Caco-2 (cell line): ENCODE measurements at regions of chr13 and their contacts with region 1.

Region 1: GRCh38 chr13:30114571-30115256 is 192.6 kb downstream of the KATNAL1 start:
- DNase-seq: peak; percentile 91 to 96
- H3K4me3 ChIP-seq: peak overlapping the region; percentile 64
- H3K4me3 Mint-ChIP-seq: peak overlapping the region; percentile 95
- H3K27ac Mint-ChIP-seq: peak overlapping the region; percentile 96
- H3K4me1 ChIP-seq: peaks cover 31% of the 10 kb centered on the region
- H3K4me1 Mint-ChIP-seq: peaks cover 33% of the 10 kb centered on the region
- H3K27me3 ChIP-seq: no peaks in the 10 kb centered on the region
- H3K27me3 Mint-ChIP-seq: no peaks in the 10 kb centered on the region
- CTCF ChIP-seq: peak; percentile 93 to 96

Region 2: DNA sequence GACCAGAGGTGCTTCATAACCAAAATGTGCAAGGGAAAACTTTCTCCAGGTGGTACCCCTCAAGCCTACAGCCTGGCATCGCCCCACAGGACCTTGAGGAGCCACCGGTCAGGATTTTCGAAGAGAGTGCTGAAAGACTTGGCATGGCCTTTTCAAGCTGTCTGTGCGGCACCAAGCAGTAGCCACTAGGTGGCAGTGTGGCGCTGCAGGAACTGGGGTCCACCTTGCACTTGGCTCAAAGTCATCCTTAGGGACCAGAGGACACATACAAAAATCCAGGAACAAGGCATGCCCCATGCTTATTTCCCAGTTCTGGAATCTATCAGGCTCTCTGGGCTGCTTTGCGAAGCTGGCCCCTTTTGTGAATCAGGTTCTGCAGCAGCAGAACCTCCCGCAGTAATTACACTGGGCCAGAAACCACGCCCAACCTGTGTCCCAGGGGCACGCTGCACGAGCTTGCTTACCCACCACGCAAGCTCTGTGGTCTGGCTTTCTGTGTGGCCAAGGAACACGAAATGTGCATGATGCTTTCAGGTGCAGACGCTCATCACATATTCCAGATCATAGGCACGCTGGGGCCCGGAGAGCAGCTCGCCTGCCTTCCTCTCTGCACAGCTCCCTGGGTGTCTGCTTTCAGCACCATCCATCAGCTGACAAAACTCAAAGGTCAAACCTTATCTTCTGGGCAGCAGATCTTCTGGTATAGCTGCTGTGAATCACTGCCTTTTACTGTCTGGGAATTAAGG is 606.4 kb before region 1 on chr13:
- CTCF ChIA-PET with region 1: interaction called, 8 read pairs
- POLR2A ChIA-PET with region 1: no interaction called
- intact Hi-C with region 1: loop called (anchors 1 kb)
- DNase-seq: peak; percentile 78 to 86
- H3K4me3 ChIP-seq: no peak overlapping the region
- H3K4me3 Mint-ChIP-seq: peak overlapping the region; percentile 32
- H3K27ac Mint-ChIP-seq: peak overlapping the region; percentile 87
- H3K4me1 ChIP-seq: peaks cover 14% of the 10 kb centered on the region
- H3K4me1 Mint-ChIP-seq: peaks cover 20% of the 10 kb centered on the region
- H3K27me3 ChIP-seq: no peaks in the 10 kb centered on the region
- H3K27me3 Mint-ChIP-seq: no peaks in the 10 kb centered on the region
- CTCF ChIP-seq: peak; percentile 90 to 98

Region 3: GRCh38 chr13:29763436-29764180 is 351.1 kb before region 1 on chr13:
- CTCF ChIA-PET with region 1: interaction called, 3 read pairs
- POLR2A ChIA-PET with region 1: no interaction called
- intact Hi-C with region 1: loop called (anchors 2 kb)
- DNase-seq: no peak
- H3K4me3 ChIP-seq: no peak overlapping the region
- H3K4me3 Mint-ChIP-seq: no peak overlapping the region
- H3K27ac Mint-ChIP-seq: no peak overlapping the region
- H3K4me1 ChIP-seq: no peaks in the 10 kb centered on the region
- H3K4me1 Mint-ChIP-seq: peaks cover 4% of the 10 kb centered on the region
- H3K27me3 ChIP-seq: no peaks in the 10 kb centered on the region
- H3K27me3 Mint-ChIP-seq: no peaks in the 10 kb centered on the region
- CTCF ChIP-seq: no peak

Region 4: DNA sequence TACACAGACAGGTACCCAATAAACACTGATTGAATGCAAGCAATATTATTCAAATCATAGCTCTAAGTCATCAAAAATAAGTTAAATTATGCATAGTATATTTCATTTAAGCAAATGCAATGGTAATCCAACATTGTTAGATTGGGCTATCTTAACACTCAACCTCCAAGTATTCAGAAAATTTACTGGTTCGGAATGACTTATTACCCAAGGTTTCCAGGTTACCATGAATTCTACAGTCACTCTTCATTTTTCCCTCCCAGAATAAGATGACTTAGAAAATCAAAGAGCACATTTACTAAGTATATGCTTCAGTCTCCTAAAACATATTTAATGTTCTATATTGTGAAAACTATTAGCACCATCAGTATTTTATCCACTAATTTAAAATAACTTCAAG is 270.3 kb before region 1 on chr13:
- CTCF ChIA-PET with region 1: interaction called, 13 read pairs
- POLR2A ChIA-PET with region 1: interaction called, 4 read pairs
- intact Hi-C with region 1: loop called (anchors 1 kb)
- DNase-seq: no peak
- H3K4me3 ChIP-seq: no peak overlapping the region
- H3K4me3 Mint-ChIP-seq: no peak overlapping the region
- H3K27ac Mint-ChIP-seq: peak overlapping the region; percentile 32
- H3K4me1 ChIP-seq: peaks cover 58% of the 10 kb centered on the region
- H3K4me1 Mint-ChIP-seq: peaks cover 41% of the 10 kb centered on the region
- H3K27me3 ChIP-seq: no peaks in the 10 kb centered on the region
- H3K27me3 Mint-ChIP-seq: no peaks in the 10 kb centered on the region
- CTCF ChIP-seq: no peak

Region 5: GRCh38 chr13:29923554-29924481 is 190.9 kb before region 1 on chr13:
- CTCF ChIA-PET with region 1: interaction called, 45 read pairs
- POLR2A ChIA-PET with region 1: interaction called, 5 read pairs
- intact Hi-C with region 1: loop called (anchors 1 kb)
- DNase-seq: peak; percentile 95 to 97
- H3K4me3 ChIP-seq: no peak overlapping the region
- H3K4me3 Mint-ChIP-seq: peak overlapping the region; percentile 41
- H3K27ac Mint-ChIP-seq: peak overlapping the region; percentile 92
- H3K4me1 ChIP-seq: peaks cover 38% of the 10 kb centered on the region
- H3K4me1 Mint-ChIP-seq: peaks cover 37% of the 10 kb centered on the region
- H3K27me3 ChIP-seq: no peaks in the 10 kb centered on the region
- H3K27me3 Mint-ChIP-seq: no peaks in the 10 kb centered on the region
- CTCF ChIP-seq: peak; percentile 97

Region 6: GRCh38 chr13:30002577-30002976 is 112.1 kb before region 1 on chr13:
- CTCF ChIA-PET with region 1: no interaction called
- POLR2A ChIA-PET with region 1: no interaction called
- intact Hi-C with region 1: no loop called
- DNase-seq: no peak
- H3K4me3 ChIP-seq: no peak overlapping the region
- H3K4me3 Mint-ChIP-seq: no peak overlapping the region
- H3K27ac Mint-ChIP-seq: no peak overlapping the region
- H3K4me1 ChIP-seq: no peaks in the 10 kb centered on the region; the same call in 1 of the 2 replicates
- H3K4me1 Mint-ChIP-seq: peaks cover 19% of the 10 kb centered on the region
- H3K27me3 ChIP-seq: no peaks in the 10 kb centered on the region
- H3K27me3 Mint-ChIP-seq: no peaks in the 10 kb centered on the region
- CTCF ChIP-seq: no peak

Region 7: GRCh38 chr13:30026093-30026492 is 88.6 kb before region 1 on chr13:
- CTCF ChIA-PET with region 1: interaction called, 5 read pairs
- POLR2A ChIA-PET with region 1: interaction called, 4 read pairs
- intact Hi-C with region 1: loop called (anchors 10 kb)
- DNase-seq: no peak
- H3K4me3 ChIP-seq: no peak overlapping the region
- H3K4me3 Mint-ChIP-seq: no peak overlapping the region
- H3K27ac Mint-ChIP-seq: peak overlapping the region; percentile 73
- H3K4me1 ChIP-seq: peaks cover 59% of the 10 kb centered on the region
- H3K4me1 Mint-ChIP-seq: peaks cover 35% of the 10 kb centered on the region
- H3K27me3 ChIP-seq: no peaks in the 10 kb centered on the region
- H3K27me3 Mint-ChIP-seq: no peaks in the 10 kb centered on the region
- CTCF ChIP-seq: no peak

Region 8: DNA sequence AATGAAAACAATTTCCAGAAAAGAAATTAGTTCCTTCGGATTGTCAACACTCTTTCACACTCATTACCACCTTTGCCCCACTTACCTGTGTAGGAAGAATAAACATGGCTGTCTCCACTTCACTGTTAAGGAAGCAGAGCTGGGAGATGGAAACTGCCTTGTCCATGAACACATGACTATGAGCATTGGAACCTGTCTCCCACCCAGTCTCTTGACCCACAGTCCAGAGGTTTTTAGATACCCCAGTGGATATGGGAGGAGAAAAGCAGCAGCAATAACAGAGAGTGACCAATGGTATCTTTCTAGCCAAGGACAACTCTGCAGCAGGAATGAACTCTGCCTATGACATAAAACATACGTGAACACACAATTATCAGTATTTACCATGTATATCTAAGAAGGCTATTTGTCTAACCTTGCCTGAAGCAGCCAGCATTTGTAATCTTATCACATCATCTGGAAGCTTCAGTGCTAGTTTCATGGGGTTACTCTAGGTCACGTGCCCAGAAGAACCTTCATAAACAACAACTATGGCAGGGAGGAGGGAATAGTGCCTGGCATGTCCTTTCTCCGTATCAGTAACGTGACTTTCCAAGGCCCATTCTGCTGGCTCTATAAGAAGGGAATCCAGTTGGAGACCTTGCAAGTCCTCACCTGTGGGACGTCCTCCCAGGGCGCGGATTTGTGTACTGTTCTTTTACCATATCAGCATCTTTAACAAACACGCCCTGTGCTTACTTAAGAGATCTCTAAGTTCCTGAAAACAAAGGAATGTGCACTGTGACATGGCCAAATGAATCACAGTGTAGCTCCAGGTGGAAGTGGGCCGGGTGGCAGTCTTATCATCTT is 42.5 kb before region 1 on chr13:
- CTCF ChIA-PET with region 1: interaction called, 7 read pairs
- POLR2A ChIA-PET with region 1: no interaction called
- intact Hi-C with region 1: loop called (anchors 1 kb)
- DNase-seq: peak; percentile 86 to 93
- H3K4me3 ChIP-seq: no peak overlapping the region
- H3K4me3 Mint-ChIP-seq: peak overlapping the region; percentile 61
- H3K27ac Mint-ChIP-seq: peak overlapping the region; percentile 91
- H3K4me1 ChIP-seq: peaks cover 23% of the 10 kb centered on the region
- H3K4me1 Mint-ChIP-seq: peaks cover 23% of the 10 kb centered on the region
- H3K27me3 ChIP-seq: no peaks in the 10 kb centered on the region
- H3K27me3 Mint-ChIP-seq: no peaks in the 10 kb centered on the region
- CTCF ChIP-seq: no peak

Region 9: GRCh38 chr13:30158774-30159445 is 44.2 kb after region 1 on chr13:
- CTCF ChIA-PET with region 1: no interaction called
- POLR2A ChIA-PET with region 1: no interaction called
- intact Hi-C with region 1: no loop called
- DNase-seq: no peak
- H3K4me3 ChIP-seq: no peak overlapping the region
- H3K4me3 Mint-ChIP-seq: no peak overlapping the region
- H3K27ac Mint-ChIP-seq: no peak overlapping the region
- H3K4me1 ChIP-seq: no peaks in the 10 kb centered on the region
- H3K4me1 Mint-ChIP-seq: no peaks in the 10 kb centered on the region
- H3K27me3 ChIP-seq: no peaks in the 10 kb centered on the region
- H3K27me3 Mint-ChIP-seq: peaks cover 3% of the 10 kb centered on the region
- CTCF ChIP-seq: peak; percentile 29 to 46